ENCODE measurements at regions of chr4 and their contacts with region 1.

Region 1: DNA sequence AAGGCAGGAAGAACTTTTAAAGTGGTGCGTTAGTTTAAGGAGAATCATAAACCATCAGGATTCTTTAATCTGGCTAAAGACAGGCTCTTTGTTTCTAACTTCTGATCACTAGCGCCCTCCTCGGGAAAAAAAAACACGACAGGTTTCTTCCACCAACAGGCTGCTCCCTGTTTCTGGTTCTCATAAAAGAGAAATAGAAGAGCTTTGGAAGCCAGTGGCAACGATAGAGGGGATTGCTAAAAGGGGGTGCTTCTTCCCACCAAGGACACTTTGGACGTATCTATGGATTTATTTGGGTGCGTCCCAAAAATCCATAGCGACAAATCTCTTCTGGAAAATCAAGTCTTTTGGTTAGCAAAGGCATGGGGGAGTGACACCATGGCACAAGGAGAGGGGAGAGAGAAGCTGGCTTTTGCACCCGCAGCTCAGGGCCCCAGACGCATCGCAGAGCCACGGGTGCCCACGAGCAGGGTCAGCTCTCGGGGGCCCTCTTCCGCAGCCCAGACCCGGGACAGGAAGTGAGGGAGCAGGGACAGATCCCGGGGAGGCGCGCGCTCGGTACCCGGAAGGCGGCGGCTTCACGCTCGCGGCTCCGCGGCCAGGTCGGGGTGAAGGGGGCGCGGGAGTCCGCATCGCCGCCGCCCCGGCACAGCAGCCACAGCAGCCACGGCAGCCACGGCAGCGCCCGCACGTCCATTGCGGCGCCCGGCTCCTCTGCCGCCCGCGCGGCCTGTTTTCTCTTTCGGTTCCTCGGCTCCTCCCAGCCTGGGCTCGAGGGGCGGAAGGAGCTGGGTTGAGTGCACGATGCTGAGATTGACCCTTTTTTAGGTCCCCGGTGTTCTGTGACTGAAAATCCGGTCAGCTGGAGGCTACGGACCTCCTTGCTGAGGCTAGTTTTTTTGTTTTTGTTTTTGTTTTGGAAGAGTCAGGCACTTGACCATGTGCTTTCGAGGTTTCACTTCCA is at the start of gene CTSO:
- DNase-seq: no peak
- H3K4me3 ChIP-seq: peak within 1 kb of the TSS; percentile 64
- H3K27me3 ChIP-seq: no peaks in the 10 kb centered on the region
- CTCF ChIP-seq: peak; percentile 54
- polyA plus RNA-seq, gene CTSO: 7.8 and 14.1 TPM in 2 replicates

Region 2: GRCh38 chr4:155795991-155796390 is 157.4 kb before region 1 on chr4:
- CTCF ChIA-PET with region 1: interaction called, 16 read pairs
- POLR2A ChIA-PET with region 1: no interaction called
- DNase-seq: no peak
- H3K4me3 ChIP-seq: no peak overlapping the region
- H3K27me3 ChIP-seq: no peaks in the 10 kb centered on the region
- CTCF ChIP-seq: peak; percentile 50

Region 3: GRCh38 chr4:155809835-155810234 is 143.6 kb before region 1 on chr4:
- CTCF ChIA-PET with region 1: interaction called, 47 read pairs
- POLR2A ChIA-PET with region 1: no interaction called
- DNase-seq: peak; percentile 36
- H3K4me3 ChIP-seq: no peak overlapping the region
- H3K27me3 ChIP-seq: no peaks in the 10 kb centered on the region
- CTCF ChIP-seq: peak; percentile 66

Region 4: DNA sequence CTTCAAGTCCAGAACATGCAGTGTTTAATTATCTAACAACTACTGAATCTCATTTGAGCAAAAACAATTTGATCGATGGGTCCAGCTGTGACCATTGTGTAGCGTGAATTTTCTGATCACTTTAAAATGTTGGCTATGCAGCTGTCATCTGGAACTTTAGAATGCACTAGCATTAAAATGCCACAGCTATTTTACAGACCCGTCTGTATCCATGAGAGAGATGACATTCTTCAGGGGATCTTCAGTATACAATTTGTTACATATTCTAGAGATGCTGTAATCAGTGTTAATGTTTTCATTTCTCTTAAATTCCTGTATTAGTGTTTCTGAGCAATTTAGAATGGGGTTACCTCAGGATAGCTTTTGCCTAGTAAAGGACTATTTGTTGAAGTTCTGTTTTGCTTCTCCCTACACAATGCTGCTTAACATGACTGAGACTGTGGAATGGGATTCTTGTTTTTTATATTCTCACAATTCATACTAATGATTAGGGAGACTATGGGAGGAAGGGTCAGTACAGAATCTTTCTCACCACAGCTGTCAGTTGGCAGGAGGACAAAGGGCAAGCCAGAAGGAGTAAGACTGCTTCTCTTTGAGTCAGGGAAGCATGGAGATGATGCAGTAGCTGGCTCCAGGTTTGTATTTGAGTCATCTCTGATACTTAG is 13.4 kb after region 1 on chr4:
- CTCF ChIA-PET with region 1: interaction called, 13 read pairs
- POLR2A ChIA-PET with region 1: no interaction called
- DNase-seq: no peak
- H3K4me3 ChIP-seq: no peak overlapping the region
- H3K27me3 ChIP-seq: no peaks in the 10 kb centered on the region
- CTCF ChIP-seq: no peak

Measured in BJ (cell line).